ENCODE measurements at regions of chr3 and their contacts with region 1.

Region 1: GRCh38 chr3:141311496-141312353 is 56.6 kb upstream of the ZBTB38 start:
- DNase-seq: peak; percentile 98
- ATAC-seq: peak; percentile 97
- H3K4me3 ChIP-seq: peak overlapping the region; percentile 74
- H3K27ac ChIP-seq: peak overlapping the region; percentile 75
- H3K4me1 ChIP-seq: peaks cover 4% of the 10 kb centered on the region; the same call in 1 of the 2 replicates
- H3K27me3 ChIP-seq: no peaks in the 10 kb centered on the region
- CTCF ChIP-seq: peak; percentile 90
- POLR2A ChIP-seq: peak; percentile 33
- RAD21 ChIP-seq: peak; percentile 92

Region 2: DNA sequence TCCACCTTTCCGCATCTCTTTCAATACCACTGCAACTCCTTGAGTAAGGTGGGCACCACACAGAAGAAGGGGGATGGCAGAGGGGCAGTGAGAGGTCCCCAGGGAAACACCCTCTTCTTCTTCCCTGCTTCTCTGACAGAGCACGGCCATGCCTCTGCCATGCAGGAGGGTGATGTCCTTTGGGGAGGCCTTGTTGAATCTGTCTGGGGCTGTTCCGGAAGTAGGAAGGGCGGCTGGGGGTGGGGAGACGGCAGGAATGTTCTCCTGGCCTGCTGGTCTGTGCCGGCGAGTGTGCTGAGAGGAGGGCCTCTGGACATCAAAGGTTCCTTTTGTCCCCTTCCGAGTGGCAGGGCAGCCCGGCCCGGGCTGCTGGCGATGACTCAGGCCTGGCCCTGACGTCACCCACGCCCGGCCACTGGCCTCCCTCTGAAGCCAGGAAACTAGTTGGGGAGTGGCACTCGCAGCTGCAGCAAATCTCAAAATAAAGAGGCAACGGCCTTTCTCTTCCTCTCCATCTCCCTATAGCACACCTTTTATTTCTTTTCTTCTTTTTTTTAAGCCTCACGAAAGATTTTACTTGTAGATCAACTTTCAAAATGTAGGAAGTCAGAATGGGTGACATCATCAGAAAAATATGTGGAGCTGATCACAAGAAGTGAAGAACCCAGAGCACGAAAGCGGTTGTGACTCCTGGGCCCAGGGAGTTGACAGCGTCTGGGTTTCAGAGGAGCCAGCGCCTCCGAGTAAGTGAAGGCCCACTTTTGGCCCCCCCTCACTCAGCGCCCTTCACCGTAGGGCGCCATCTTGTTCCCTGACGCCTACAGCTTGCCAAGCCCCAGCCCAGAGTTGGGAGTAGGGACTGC is 56.6 kb after region 1 on chr3 and contains the start of gene ZBTB38:
- CTCF ChIA-PET with region 1: interaction called, 3 read pairs
- POLR2A ChIA-PET with region 1: interaction called, 3 read pairs
- dilution Hi-C with region 1: no loop called
- in situ Hi-C with region 1: no loop called
- intact Hi-C with region 1: loop called (anchors 1 kb)
- DNase-seq: peak; percentile 97
- ATAC-seq: peak; percentile 71
- H3K4me3 ChIP-seq: peak within 1 kb of the TSS; percentile 45; the same call in 1 of the 2 replicates
- H3K27ac ChIP-seq: peak within 1 kb of the TSS; percentile 99
- H3K4me1 ChIP-seq: peaks cover 21% of the 10 kb centered on the region
- H3K27me3 ChIP-seq: no peaks in the 10 kb centered on the region
- CTCF ChIP-seq: no peak
- POLR2A ChIP-seq: peak; percentile 43
- RAD21 ChIP-seq: no peak; the same call in 1 of the 2 replicates
- total RNA-seq, gene ZBTB38: 230 and 274 TPM in 2 replicates

Region 3: GRCh38 chr3:141441381-141442364 is 129.9 kb after region 1 on chr3:
- CTCF ChIA-PET with region 1: interaction called, 5 read pairs
- POLR2A ChIA-PET with region 1: interaction called, 8 read pairs
- dilution Hi-C with region 1: no loop called
- in situ Hi-C with region 1: loop called (anchors 5 kb)
- intact Hi-C with region 1: no loop called
- DNase-seq: peak; percentile 90
- ATAC-seq: peak; percentile 72
- H3K4me3 ChIP-seq: no peak overlapping the region
- H3K27ac ChIP-seq: peak overlapping the region; percentile 97
- H3K4me1 ChIP-seq: peaks cover 34% of the 10 kb centered on the region
- H3K27me3 ChIP-seq: no peaks in the 10 kb centered on the region
- CTCF ChIP-seq: peak; percentile 67
- POLR2A ChIP-seq: no peak
- RAD21 ChIP-seq: peak; percentile 51

Region 4: DNA sequence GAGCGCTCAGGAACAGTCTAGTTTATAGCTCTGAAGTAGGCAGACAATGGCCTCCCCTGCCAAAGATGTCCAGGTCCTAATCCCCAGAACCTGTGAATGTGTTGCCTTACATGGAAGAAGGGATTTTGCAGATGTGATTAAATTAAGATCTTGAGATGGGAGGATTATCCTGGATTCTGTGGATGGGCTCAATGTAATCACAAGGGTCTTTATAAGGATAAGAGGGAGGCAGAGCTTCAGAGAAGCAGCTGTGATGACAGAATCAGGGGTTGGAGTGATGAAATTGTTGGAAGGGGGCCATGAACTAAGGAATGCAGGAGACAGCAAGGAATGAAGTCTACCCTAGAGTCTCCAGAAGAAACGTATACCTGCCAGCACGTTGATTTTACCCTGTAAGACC is 927.7 kb after region 1 on chr3:
- CTCF ChIA-PET with region 1: no interaction called
- POLR2A ChIA-PET with region 1: no interaction called
- dilution Hi-C with region 1: no loop called
- in situ Hi-C with region 1: no loop called
- intact Hi-C with region 1: no loop called
- DNase-seq: no peak
- ATAC-seq: no peak
- H3K4me3 ChIP-seq: no peak overlapping the region
- H3K27ac ChIP-seq: no peak overlapping the region
- H3K4me1 ChIP-seq: no peaks in the 10 kb centered on the region
- H3K27me3 ChIP-seq: peaks cover 1% of the 10 kb centered on the region
- CTCF ChIP-seq: no peak
- POLR2A ChIP-seq: no peak
- RAD21 ChIP-seq: no peak

Measured in IMR-90 (cell line).